AG04450 (cell line): ENCODE measurements at regions of chr10 and their contacts with region 1.

Region 1: GRCh38 chr10:72337020-72337629 is 17.6 kb downstream of the DNAJB12 start:
- DNase-seq: no peak
- H3K4me3 ChIP-seq: no peak overlapping the region
- H3K27ac ChIP-seq: no peak overlapping the region
- H3K27me3 ChIP-seq: no peaks in the 10 kb centered on the region
- CTCF ChIP-seq: peak; percentile 94

Region 2: GRCh38 chr10:72223743-72224101 is 113.4 kb before region 1 on chr10:
- CTCF ChIA-PET with region 1: interaction called, 10 read pairs
- POLR2A ChIA-PET with region 1: no interaction called
- DNase-seq: no peak
- H3K4me3 ChIP-seq: no peak overlapping the region
- H3K27ac ChIP-seq: no peak overlapping the region
- H3K27me3 ChIP-seq: no peaks in the 10 kb centered on the region
- CTCF ChIP-seq: no peak

Region 3: DNA sequence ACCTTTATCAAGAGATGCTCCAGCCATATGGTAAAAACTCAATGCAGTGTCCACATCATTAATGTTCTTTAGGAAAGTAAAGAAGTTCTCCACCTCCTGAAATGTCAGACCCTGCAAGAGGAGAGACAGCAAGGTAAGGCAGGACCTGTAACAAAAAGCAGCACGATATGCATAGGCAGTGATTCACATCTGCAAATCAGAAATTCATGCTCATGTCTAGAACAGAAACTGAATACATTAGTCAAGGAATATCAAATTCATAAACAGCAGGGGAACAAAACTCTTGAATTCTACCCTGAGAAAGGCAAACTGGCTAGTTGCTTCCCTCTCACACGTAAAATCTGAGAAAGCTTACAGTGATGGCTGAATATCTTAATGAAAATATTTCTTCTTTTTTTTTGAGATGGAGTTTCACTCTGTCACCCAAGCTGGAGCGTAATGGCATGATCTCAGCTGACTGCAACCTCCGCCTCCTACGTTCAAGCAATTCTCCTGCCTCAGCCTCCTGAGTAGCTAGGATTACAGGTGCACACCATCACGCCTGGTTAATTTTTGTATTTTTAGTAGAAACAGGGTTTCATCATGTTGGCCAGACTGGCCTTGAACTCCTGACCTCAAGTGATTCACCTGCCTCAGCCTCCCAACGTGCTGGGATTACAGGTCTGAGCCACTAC is 70.9 kb after region 1 on chr10:
- CTCF ChIA-PET with region 1: no interaction called
- POLR2A ChIA-PET with region 1: no interaction called
- DNase-seq: no peak
- H3K4me3 ChIP-seq: no peak overlapping the region
- H3K27ac ChIP-seq: no peak overlapping the region
- H3K27me3 ChIP-seq: no peaks in the 10 kb centered on the region
- CTCF ChIP-seq: no peak

Region 4: GRCh38 chr10:72455889-72456595 is 118.9 kb after region 1 on chr10:
- CTCF ChIA-PET with region 1: no interaction called
- POLR2A ChIA-PET with region 1: no interaction called
- DNase-seq: no peak
- H3K4me3 ChIP-seq: no peak overlapping the region
- H3K27ac ChIP-seq: no peak overlapping the region
- H3K27me3 ChIP-seq: no peaks in the 10 kb centered on the region
- CTCF ChIP-seq: no peak